ENCODE measurements at regions of chr3 and their contacts with region 1.

Region 1: GRCh38 chr3:39288300-39288808 is 8.5 kb upstream of the CX3CR1 start:
- DNase-seq: peak; percentile 91
- ATAC-seq: peak; percentile 96
- H3K4me3 Mint-ChIP-seq: no peak overlapping the region
- H3K27ac Mint-ChIP-seq: peak overlapping the region; percentile 0
- H3K4me1 Mint-ChIP-seq: peaks cover 46% of the 10 kb centered on the region
- H3K27me3 Mint-ChIP-seq: peaks cover 3% of the 10 kb centered on the region

Region 2: GRCh38 chr3:39107388-39108199 is 180.8 kb before region 1 on chr3 and contains the starts of genes GORASP1 and TTC21A:
- CTCF ChIA-PET with region 1: interaction called, 59 read pairs
- POLR2A ChIA-PET with region 1: no interaction called
- DNase-seq: peak; percentile 72
- ATAC-seq: peak; percentile 70
- H3K4me3 Mint-ChIP-seq: peak within 1 kb of the TSS; percentile 88
- H3K27ac Mint-ChIP-seq: peak within 1 kb of the TSS; percentile 81
- H3K4me1 Mint-ChIP-seq: peaks cover 40% of the 10 kb centered on the region
- H3K27me3 Mint-ChIP-seq: peaks cover 32% of the 10 kb centered on the region
- total RNA-seq, gene GORASP1: 10.8 to 11.0 TPM
- total RNA-seq, gene TTC21A: 0.97 to 1.2 TPM

Region 3: GRCh38 chr3:39180546-39181346 is 107.6 kb before region 1 on chr3:
- CTCF ChIA-PET with region 1: interaction called, 483 read pairs
- POLR2A ChIA-PET with region 1: no interaction called
- DNase-seq: peak; percentile 93
- ATAC-seq: peak; percentile 89
- H3K4me3 Mint-ChIP-seq: peak overlapping the region; percentile 75
- H3K27ac Mint-ChIP-seq: peak overlapping the region; percentile 75
- H3K4me1 Mint-ChIP-seq: peaks cover 49% of the 10 kb centered on the region
- H3K27me3 Mint-ChIP-seq: no peaks in the 10 kb centered on the region

Region 4: DNA sequence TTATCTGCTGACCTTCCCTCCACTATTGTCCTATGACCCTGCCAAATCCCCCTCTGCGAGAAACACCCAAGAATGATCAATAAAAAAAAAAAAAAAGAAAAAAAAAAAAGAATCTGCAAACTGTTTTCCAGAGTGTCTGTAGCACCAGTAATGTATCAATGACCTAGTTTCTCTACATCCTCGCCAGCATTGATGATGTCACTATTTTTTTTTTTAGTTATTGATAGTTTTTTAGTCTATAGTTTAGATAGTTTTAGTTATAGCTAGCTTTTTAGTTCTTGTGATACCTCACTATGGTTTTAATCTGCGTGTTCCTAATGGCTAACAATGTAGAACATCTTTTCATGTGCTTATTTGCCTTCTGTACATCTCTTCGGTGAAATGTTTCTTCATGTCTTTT is 59.9 kb before region 1 on chr3:
- CTCF ChIA-PET with region 1: interaction called, 27 read pairs
- POLR2A ChIA-PET with region 1: no interaction called
- DNase-seq: no peak
- ATAC-seq: no peak
- H3K4me3 Mint-ChIP-seq: no peak overlapping the region
- H3K27ac Mint-ChIP-seq: no peak overlapping the region
- H3K4me1 Mint-ChIP-seq: peaks cover 10% of the 10 kb centered on the region
- H3K27me3 Mint-ChIP-seq: peaks cover 43% of the 10 kb centered on the region

Region 5: GRCh38 chr3:39302178-39302577 is 13.8 kb after region 1 on chr3:
- CTCF ChIA-PET with region 1: interaction called, 18 read pairs
- POLR2A ChIA-PET with region 1: no interaction called
- DNase-seq: no peak
- ATAC-seq: no peak
- H3K4me3 Mint-ChIP-seq: no peak overlapping the region
- H3K27ac Mint-ChIP-seq: no peak overlapping the region
- H3K4me1 Mint-ChIP-seq: no peaks in the 10 kb centered on the region
- H3K27me3 Mint-ChIP-seq: peaks cover 23% of the 10 kb centered on the region

Region 6: GRCh38 chr3:39361252-39361927 is 73.0 kb after region 1 on chr3:
- CTCF ChIA-PET with region 1: interaction called, 52 read pairs
- POLR2A ChIA-PET with region 1: interaction called, 3 read pairs
- DNase-seq: peak; percentile 72
- ATAC-seq: peak; percentile 86
- H3K4me3 Mint-ChIP-seq: peak overlapping the region; percentile 49
- H3K27ac Mint-ChIP-seq: peak overlapping the region; percentile 83
- H3K4me1 Mint-ChIP-seq: peaks cover 59% of the 10 kb centered on the region
- H3K27me3 Mint-ChIP-seq: peaks cover 19% of the 10 kb centered on the region

Measured in activated CD8-positive, alpha-beta T cell treated with anti-CD3 and anti-CD28 coated beads, Interleukin-2, amount 10 ng/mL, durations not matched to agents 7 days and 5 days (primary cell).